ENCODE measurements at regions of chr7 and their contacts with region 1.

Region 1: DNA sequence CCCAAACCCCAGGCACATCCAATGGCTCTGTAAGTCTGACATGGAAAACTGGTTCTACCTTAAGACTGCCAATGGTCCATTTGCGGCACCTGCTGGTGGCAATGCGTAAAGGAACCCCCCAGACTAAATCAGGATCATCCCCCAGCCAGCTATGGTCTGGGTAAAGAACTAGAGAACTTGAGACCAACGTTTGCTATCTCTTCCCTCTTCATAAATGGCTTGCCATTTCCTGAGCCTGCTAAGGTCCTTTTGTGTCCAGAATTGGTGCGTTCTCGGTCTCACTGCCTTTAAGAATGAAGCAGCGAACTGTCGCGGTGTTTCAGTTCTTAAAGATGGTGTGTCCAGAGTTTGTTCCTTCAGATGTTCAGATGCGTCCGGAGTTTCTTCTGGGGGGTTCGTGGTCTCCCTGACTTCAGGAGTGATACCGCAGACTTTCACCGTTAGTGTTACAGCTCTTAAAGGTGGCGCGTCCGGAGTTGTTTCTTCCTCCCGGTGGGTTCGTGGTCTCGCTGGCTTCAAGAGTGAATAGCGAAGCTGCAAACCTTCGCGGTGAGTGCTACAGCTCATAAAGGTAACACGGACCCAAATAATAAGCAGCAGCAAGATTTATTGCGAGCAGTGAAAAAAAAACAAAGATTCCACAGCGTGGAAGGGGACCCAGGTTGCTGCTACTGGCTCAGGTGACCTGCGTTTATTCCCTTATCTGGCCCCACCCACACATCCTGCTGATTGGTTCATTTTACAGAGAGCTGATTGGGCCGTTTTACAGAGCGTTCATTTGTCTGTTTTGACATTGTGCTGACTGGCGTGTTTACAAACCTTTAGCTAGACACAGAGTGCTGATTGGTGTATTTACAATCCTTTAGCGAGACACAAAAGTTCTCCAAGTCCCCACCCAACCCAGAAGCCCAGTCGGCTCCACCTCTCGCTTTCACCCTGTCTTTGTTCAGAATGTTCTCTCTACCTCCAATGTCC is 95.4 kb downstream of the ELMO1 start:
- DNase-seq: peak; percentile 82
- H3K4me3 ChIP-seq: peak overlapping the region; percentile 74
- H3K27ac ChIP-seq: peak overlapping the region; percentile 27
- H3K4me1 ChIP-seq: peaks cover 26% of the 10 kb centered on the region
- CTCF ChIP-seq: peak; percentile 99

Region 2: DNA sequence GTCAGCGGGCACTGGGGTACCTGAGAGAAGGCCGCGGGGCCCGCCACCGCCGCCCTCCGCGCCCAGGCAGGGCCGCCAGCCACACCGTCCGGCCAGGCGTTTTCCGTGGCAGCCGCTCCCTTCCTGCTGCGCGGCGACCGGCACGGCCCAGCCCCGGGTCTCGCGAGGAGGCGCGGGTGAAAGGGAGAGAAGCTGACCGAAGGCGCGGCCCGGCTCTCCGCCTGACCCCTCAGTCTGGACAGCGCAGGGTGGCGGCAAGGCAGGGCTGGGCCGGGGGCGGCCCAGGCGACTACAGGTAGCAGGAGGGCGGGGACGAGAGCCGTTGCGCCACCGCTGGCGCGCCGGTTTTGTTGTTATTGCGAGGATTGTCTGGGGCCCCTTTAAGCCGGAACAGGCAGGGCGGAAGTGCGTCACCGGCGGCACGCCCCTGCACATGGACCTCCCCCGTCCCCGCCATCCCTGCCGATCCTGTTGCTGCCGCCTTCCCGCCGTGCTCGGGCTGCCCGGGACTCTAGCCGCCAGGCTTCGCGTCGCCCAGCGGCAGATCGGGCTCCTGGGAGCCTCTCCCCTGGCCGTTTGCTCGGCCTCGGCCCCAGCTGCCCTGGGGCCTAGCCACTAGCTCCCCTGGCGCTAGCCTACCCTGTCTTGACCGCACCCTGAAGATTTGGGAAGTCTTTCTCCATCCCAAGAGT is 1658.3 kb before region 1 on chr7 and contains the start of gene HERPUD2:
- CTCF ChIA-PET with region 1: no interaction called
- POLR2A ChIA-PET with region 1: no interaction called
- intact Hi-C with region 1: no loop called
- DNase-seq: peak; percentile 92
- H3K4me3 ChIP-seq: peak within 1 kb of the TSS; percentile 87
- H3K27ac ChIP-seq: peak within 1 kb of the TSS; percentile 52
- H3K4me1 ChIP-seq: peaks cover 41% of the 10 kb centered on the region
- CTCF ChIP-seq: no peak
- total RNA-seq, gene HERPUD2: 11.9 and 18.8 TPM in 2 replicates

Region 3: GRCh38 chr7:37201003-37201875 is 152.0 kb before region 1 on chr7:
- CTCF ChIA-PET with region 1: no interaction called
- POLR2A ChIA-PET with region 1: interaction called, 6 read pairs
- intact Hi-C with region 1: loop called (anchors 1 kb)
- DNase-seq: peak; percentile 64
- H3K4me3 ChIP-seq: no peak overlapping the region
- H3K27ac ChIP-seq: peak overlapping the region; percentile 30
- H3K4me1 ChIP-seq: peaks cover 26% of the 10 kb centered on the region
- CTCF ChIP-seq: peak; percentile 89

Region 4: GRCh38 chr7:37216156-37216852 is 137.0 kb before region 1 on chr7:
- CTCF ChIA-PET with region 1: no interaction called
- POLR2A ChIA-PET with region 1: no interaction called
- intact Hi-C with region 1: loop called (anchors 5 kb)
- DNase-seq: no peak
- H3K4me3 ChIP-seq: no peak overlapping the region
- H3K27ac ChIP-seq: no peak overlapping the region
- H3K4me1 ChIP-seq: no peaks in the 10 kb centered on the region
- CTCF ChIP-seq: no peak

Region 5: DNA sequence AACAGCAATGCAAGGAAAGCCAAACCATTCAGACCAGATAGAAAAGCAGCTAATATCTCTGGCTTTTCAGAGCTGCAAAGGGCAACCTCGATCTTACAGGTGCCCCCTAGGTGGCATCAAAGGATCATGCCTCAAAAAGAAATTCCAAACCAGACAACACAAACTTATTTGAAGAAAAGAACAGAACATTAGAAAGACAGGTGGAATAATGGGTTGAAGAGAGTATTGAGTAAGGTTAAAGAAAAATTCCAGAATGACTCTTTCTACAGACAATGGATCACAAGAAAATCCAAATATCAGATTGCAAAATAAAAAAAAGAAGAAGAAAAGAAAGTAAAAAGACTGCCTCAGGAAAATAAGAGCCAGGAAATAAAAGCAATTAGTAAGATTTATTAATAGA is 118.3 kb before region 1 on chr7:
- CTCF ChIA-PET with region 1: interaction called, 15 read pairs
- POLR2A ChIA-PET with region 1: interaction called, 4 read pairs
- intact Hi-C with region 1: loop called (anchors 1 kb)
- DNase-seq: peak; percentile 48
- H3K4me3 ChIP-seq: no peak overlapping the region
- H3K27ac ChIP-seq: no peak overlapping the region
- H3K4me1 ChIP-seq: no peaks in the 10 kb centered on the region
- CTCF ChIP-seq: peak; percentile 82

Region 6: GRCh38 chr7:37284805-37285231 is 68.4 kb before region 1 on chr7:
- CTCF ChIA-PET with region 1: interaction called, 6 read pairs
- POLR2A ChIA-PET with region 1: interaction called, 4 read pairs
- intact Hi-C with region 1: loop called (anchors 1 kb)
- DNase-seq: peak; percentile 47
- H3K4me3 ChIP-seq: no peak overlapping the region
- H3K27ac ChIP-seq: no peak overlapping the region
- H3K4me1 ChIP-seq: peaks cover 36% of the 10 kb centered on the region
- CTCF ChIP-seq: peak; percentile 92

Region 7: DNA sequence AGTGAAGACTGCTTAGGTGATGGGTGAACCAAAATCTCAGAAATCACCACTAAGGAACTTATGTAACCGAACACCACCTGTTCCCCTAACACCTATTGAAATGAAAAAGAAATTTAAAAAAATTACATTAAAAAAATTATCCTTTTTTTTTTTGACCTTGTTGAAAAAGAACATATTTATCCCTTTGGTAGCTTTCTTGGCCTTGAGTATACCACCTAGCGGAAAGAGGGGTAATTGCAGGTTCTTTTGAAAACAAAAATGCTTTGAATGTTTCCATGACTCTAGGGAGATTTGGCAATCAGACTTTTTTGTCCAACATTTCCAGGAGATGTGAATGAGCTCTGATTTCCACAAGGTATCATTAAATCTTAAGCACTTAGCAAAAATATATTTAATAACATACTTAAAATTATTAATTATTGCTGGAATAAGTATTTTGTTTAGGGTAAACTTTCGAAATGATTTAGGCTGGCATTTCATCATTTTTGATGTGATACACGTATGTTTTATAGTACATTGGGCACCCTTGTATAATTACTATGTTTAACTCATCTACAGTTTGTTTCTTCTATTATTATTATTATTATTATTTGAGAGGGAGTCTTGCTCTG is 142.4 kb after region 1 on chr7:
- CTCF ChIA-PET with region 1: no interaction called
- POLR2A ChIA-PET with region 1: no interaction called
- intact Hi-C with region 1: loop called (anchors 10 kb)
- DNase-seq: peak; percentile 29
- H3K4me3 ChIP-seq: no peak overlapping the region
- H3K27ac ChIP-seq: no peak overlapping the region
- H3K4me1 ChIP-seq: no peaks in the 10 kb centered on the region
- CTCF ChIP-seq: peak; percentile 82

Region 8: GRCh38 chr7:37853474-37853873 is 500.2 kb after region 1 on chr7:
- CTCF ChIA-PET with region 1: no interaction called
- POLR2A ChIA-PET with region 1: no interaction called
- intact Hi-C with region 1: no loop called
- DNase-seq: peak; percentile 13
- H3K4me3 ChIP-seq: no peak overlapping the region
- H3K27ac ChIP-seq: no peak overlapping the region
- H3K4me1 ChIP-seq: no peaks in the 10 kb centered on the region
- CTCF ChIP-seq: peak; percentile 74